ENCODE measurements at regions of chr19 and their contacts with region 1.

Region 1: GRCh38 chr19:10194500-10195289 is at the start of gene DNMT1:
- DNase-seq: peak; percentile 97
- H3K4me3 Mint-ChIP-seq: peak within 1 kb of the TSS; percentile 97
- H3K27ac Mint-ChIP-seq: peak within 1 kb of the TSS; percentile 97
- H3K4me1 Mint-ChIP-seq: peaks cover 16% of the 10 kb centered on the region
- H3K27me3 Mint-ChIP-seq: no peaks in the 10 kb centered on the region
- total RNA-seq, gene DNMT1: 411 and 425 TPM in 2 replicates

Region 2: GRCh38 chr19:10230861-10231611 is 36.3 kb after region 1 on chr19 and contains the start of gene S1PR2:
- intact Hi-C with region 1: loop called (anchors 1 kb)
- DNase-seq: peak; percentile 45
- H3K4me3 Mint-ChIP-seq: peak within 1 kb of the TSS; percentile 86
- H3K27ac Mint-ChIP-seq: peak within 1 kb of the TSS; percentile 82
- H3K4me1 Mint-ChIP-seq: peaks cover 23% of the 10 kb centered on the region
- H3K27me3 Mint-ChIP-seq: peaks cover 5% of the 10 kb centered on the region
- total RNA-seq, gene S1PR2: 15.4 and 16.0 TPM in 2 replicates

Measured in activated T-helper 1 cell treated with anti-CD3 and anti-CD28 coated beads, Interleukin-12 subunit alpha, Interleukin-12 subunit beta, Interleukin-2, Interleukin-4 antibody, amounts not matched to agents 30 ng/mL and 10 ng/mL and 1 ng/mL, durations not matched to agents 14 hours and 24 hours and 36 hours (primary cell).